ENCODE measurements at regions of chr20 and their contacts with region 1.

Region 1: GRCh38 chr20:3679749-3680700 is 1.8 kb downstream of the ADAM33 start:
- DNase-seq: no peak
- H3K4me3 ChIP-seq: peak overlapping the region in 1 of 2 donors; percentile 34
- H3K27ac ChIP-seq: peak overlapping the region; percentile 69 to 76
- H3K4me1 ChIP-seq: no peaks in the 10 kb centered on the region
- H3K27me3 ChIP-seq: peaks cover 3% of the 10 kb centered on the region
- CTCF ChIP-seq: no peak
- POLR2A ChIP-seq: no peak

Region 2: GRCh38 chr20:3710703-3711483 is 30.9 kb after region 1 on chr20:
- intact Hi-C with region 1: loop called (anchors 2 kb)
- DNase-seq: peak; percentile 44
- H3K4me3 ChIP-seq: no peak overlapping the region
- H3K27ac ChIP-seq: no peak overlapping the region
- H3K4me1 ChIP-seq: no peaks in the 10 kb centered on the region
- H3K27me3 ChIP-seq: no peaks in the 10 kb centered on the region
- CTCF ChIP-seq: peak; percentile 84 to 99 (median 90)
- POLR2A ChIP-seq: no peak

Region 3: DNA sequence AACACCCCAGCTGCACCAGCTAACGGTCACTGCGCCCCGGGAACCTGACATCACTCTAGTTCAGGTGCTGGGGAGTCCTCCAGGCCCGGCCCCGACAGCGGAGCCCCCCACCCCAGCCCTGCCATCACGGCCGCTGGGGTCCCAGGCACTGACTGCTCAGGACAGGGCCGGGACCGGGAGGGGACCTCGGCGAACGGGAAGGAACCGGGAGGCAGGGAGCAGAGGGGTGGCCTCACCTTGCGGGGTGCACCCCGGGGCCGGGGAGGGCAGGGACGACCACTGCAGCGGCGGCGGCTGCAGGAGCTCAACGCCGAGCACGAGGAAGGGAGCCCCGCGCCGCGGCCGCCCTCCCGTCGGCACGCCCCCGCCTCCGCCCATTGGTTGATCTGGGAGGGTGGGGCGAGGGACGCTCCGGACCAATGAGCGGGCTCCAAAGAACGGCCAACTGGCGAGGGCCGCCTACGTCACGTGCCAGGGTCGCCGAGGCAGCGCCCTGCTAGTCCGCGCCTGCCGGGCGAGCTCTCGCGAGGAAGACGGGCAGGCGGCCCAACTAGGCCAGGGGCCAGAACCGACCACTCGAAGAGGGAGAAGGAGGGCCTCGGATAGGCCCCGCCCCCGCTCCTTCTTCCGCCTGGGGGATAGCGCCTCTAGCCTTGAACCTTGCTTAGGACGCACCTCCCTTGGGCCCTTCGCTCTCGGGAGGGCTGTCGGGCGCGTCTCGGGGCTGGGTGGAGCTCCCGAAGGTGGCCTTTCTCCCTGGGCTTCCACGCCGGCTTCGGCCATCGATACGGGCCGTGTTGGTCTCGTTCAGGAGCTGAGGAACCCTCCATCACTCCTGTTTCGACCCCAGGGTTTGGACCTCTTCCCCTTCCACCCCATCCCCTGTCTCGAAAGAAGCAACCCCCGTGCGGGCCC is 87.7 kb after region 1 on chr20 and contains the start of gene ADISSP:
- intact Hi-C with region 1: loop called (anchors 5 kb)
- DNase-seq: peak; percentile 97
- H3K4me3 ChIP-seq: peak within 1 kb of the TSS; percentile 53 to 54
- H3K27ac ChIP-seq: peak within 1 kb of the TSS; percentile 81 to 88
- H3K4me1 ChIP-seq: no peaks in the 10 kb centered on the region
- H3K27me3 ChIP-seq: no peaks in the 10 kb centered on the region
- CTCF ChIP-seq: peak in 1 of 4 experiments; percentile 22
- POLR2A ChIP-seq: peak; percentile 74
- total RNA-seq, gene ADISSP: 11.8 to 14.6 TPM

Region 4: GRCh38 chr20:3846740-3847428 is 166.9 kb after region 1 on chr20 and contains the start of gene MAVS:
- intact Hi-C with region 1: loop called (anchors 10 kb)
- DNase-seq: peak; percentile 87
- H3K4me3 ChIP-seq: peak within 1 kb of the TSS; percentile 90 to 97
- H3K27ac ChIP-seq: peak within 1 kb of the TSS; percentile 87 to 89
- H3K4me1 ChIP-seq: peaks cover 4% of the 10 kb centered on the region
- H3K27me3 ChIP-seq: no peaks in the 10 kb centered on the region
- CTCF ChIP-seq: peak in 1 of 4 experiments; percentile 28
- POLR2A ChIP-seq: peak; percentile 79
- total RNA-seq, gene MAVS: 26.7 to 40.2 TPM